AG04449 (cell line): ENCODE measurements at regions of chr10 and their contacts with region 1.

Region 1: GRCh38 chr10:69716711-69717560 is 84.8 kb upstream of the COL13A1 start:
- DNase-seq: no peak
- H3K4me3 ChIP-seq: no peak overlapping the region
- CTCF ChIP-seq: peak; percentile 72

Region 2: GRCh38 chr10:68924593-68924992 is 792.3 kb before region 1 on chr10:
- CTCF ChIA-PET with region 1: no interaction called
- POLR2A ChIA-PET with region 1: no interaction called
- DNase-seq: no peak
- H3K4me3 ChIP-seq: no peak overlapping the region
- CTCF ChIP-seq: no peak

Region 3: GRCh38 chr10:69389827-69390490 is 327.0 kb before region 1 on chr10:
- CTCF ChIA-PET with region 1: no interaction called
- POLR2A ChIA-PET with region 1: no interaction called
- DNase-seq: no peak
- H3K4me3 ChIP-seq: no peak overlapping the region
- CTCF ChIP-seq: no peak

Region 4: DNA sequence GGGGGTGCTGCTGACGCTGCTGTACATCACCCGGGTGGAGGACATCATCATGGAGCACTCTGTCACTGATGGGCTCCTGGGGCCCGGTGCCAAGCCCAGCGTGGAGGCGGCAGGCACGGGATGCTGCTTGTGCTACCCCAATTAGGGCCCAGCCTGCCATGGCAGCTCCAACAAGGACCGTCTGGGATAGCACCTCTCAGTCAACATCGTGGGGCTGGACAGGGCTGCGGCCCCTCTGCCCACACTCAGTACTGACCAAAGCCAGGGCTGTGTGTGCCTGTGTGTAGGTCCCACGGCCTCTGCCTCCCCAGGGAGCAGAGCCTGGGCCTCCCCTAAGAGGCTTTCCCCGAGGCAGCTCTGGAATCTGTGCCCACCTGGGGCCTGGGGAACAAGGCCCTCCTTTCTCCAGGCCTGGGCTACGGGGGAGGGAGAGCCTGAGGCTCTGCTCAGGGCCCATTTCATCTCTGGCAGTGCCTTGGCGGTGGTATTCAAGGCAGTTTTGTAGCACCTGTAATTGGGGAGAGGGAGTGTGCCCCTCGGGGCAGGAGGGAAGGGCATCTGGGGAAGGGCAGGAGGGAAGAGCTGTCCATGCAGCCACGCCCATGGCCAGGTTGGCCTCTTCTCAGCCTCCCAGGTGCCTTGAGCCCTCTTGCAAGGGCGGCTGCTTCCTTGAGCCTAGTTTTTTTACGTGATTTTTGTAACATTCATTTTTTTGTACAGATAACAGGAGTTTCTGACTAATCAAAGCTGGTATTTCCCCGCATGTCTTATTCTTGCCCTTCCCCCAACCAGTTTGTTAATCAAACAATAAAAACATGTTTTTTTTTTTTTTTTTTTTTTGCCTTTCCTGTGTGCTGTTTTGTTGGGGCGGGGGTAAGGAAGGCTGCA is 209.9 kb before region 1 on chr10:
- CTCF ChIA-PET with region 1: interaction called, 10 read pairs
- POLR2A ChIA-PET with region 1: no interaction called
- DNase-seq: no peak
- H3K4me3 ChIP-seq: no peak overlapping the region
- CTCF ChIP-seq: no peak

Region 5: DNA sequence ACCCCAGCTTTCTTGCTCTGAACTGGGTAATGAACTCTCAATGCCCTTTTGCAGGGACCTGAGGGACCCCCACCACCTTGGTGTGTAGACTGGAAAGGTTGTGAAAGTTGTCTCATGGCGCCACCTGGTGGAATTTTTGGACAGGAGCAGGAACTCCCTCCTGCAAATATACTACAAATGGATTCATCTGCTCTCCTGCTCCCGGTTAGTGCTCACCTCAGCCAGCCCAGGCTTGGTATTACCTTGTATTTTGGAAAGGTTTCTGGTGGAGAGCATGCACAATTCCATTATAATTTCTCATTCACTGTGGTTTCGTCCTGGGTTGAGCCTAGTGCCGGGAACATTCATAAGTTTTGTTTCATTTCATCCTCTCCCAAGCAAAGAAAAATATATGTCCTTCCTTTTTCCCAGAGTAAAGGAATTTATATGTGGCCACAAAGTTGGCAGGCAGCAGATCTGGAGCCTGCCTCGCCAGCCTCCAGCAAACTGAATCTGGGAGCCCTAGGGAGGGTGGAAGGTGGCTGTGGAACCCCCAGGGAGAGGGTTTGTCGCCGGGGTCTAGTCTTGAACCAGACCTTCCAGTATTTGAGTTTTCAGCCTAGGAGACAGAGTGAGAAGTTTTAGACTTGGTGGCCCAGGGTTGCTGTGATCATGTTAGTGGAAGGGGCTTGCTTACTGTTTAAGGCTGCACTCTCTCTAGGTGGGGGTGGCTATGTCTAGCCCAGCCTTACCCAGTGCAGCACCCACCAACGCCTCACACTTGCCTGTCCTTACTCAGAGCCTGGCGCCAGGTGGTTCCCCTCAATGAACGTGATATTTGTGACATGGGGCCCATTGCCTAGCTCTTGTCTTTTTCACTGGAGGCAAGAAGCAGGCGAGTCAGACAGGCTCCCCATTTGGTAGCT is 77.4 kb before region 1 on chr10:
- CTCF ChIA-PET with region 1: interaction called, 214 read pairs
- POLR2A ChIA-PET with region 1: no interaction called
- DNase-seq: no peak
- H3K4me3 ChIP-seq: no peak overlapping the region
- CTCF ChIP-seq: peak; percentile 76

Region 6: DNA sequence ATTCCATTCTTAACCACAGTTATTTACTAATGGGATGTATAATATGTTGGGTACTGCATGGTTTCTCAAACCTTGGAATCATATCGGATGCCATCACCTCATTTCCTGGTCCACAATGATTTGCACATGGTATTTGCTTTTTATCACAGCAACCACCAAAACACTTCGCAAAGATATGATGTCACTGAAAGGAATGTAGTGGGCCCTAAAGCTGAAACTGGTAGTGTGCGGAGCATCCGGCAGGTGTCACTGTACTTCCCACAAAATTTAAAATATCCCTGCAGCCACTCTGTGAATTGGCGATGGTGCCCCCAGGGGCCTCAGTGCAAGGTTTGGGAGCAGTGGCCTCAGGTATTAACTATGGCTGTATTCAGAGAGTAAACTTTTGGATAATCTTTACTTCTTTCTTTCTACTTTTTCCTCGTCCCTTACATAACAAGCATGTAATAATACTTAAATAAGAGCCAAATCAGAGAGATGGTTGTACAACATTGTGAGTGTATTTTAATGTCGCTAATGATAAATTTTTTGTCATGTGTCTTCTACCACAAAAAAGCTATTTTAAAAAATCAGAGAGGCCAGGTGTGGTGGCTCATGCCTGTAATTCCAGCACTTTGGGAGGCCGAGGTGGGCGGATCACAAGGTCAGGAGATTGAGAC is 20.7 kb before region 1 on chr10:
- CTCF ChIA-PET with region 1: interaction called, 60 read pairs
- POLR2A ChIA-PET with region 1: no interaction called
- DNase-seq: peak; percentile 79
- H3K4me3 ChIP-seq: no peak overlapping the region
- CTCF ChIP-seq: peak; percentile 49

Region 7: DNA sequence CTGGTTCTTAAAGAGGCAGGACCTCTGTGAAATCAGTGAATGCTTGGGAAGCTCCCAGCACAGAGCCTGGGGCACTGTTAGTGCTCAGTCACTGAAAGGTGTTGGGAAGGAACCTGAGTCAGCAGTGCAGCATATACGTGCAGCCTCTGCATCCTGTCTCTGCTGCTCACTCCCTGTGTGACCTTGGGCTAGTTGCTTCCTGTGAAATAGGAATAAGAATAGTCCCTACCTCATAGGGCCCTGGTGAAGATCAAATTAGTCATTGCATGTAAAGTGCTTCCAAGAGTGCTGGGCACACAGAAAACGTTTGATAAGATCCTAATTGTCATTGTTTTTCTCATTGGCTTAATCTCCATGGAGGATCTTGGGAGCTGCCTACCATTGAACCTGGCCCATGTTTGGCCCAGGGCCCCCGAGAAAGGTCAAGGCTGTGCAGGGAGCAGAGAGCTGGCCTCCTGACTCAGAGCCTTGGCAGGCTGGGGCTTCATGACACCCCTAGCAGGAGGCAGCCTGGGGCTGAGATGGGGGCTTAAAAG is 11.5 kb after region 1 on chr10:
- CTCF ChIA-PET with region 1: interaction called, 102 read pairs
- POLR2A ChIA-PET with region 1: no interaction called
- DNase-seq: no peak
- H3K4me3 ChIP-seq: no peak overlapping the region
- CTCF ChIP-seq: no peak

Region 8: GRCh38 chr10:70034232-70034631 is 317.3 kb after region 1 on chr10:
- CTCF ChIA-PET with region 1: no interaction called
- POLR2A ChIA-PET with region 1: no interaction called
- DNase-seq: no peak
- H3K4me3 ChIP-seq: no peak overlapping the region
- CTCF ChIP-seq: no peak